PC-9 (cell line): ENCODE measurements at regions of chr2 and their contacts with region 1.

Region 1: GRCh38 chr2:200963124-200963917 is at the start of gene ORC2:
- DNase-seq: peak; percentile 87 to 96
- H3K4me3 ChIP-seq: peak within 1 kb of the TSS; percentile 95
- H3K27ac ChIP-seq: peak within 1 kb of the TSS; percentile 76
- H3K4me1 ChIP-seq: peaks cover 51% of the 10 kb centered on the region
- H3K27me3 ChIP-seq: no peaks in the 10 kb centered on the region
- CTCF ChIP-seq: peak; percentile 65; the same call in 1 of the 2 replicates
- total RNA-seq, gene ORC2: 34.0 and 43.3 TPM in 2 replicates

Region 2: GRCh38 chr2:200975672-200976071 is 12.4 kb after region 1 on chr2:
- CTCF ChIA-PET with region 1: no interaction called
- POLR2A ChIA-PET with region 1: interaction called, 12 read pairs
- intact Hi-C with region 1: no loop called
- DNase-seq: no peak
- H3K4me3 ChIP-seq: no peak overlapping the region
- H3K27ac ChIP-seq: no peak overlapping the region
- H3K4me1 ChIP-seq: no peaks in the 10 kb centered on the region
- H3K27me3 ChIP-seq: no peaks in the 10 kb centered on the region
- CTCF ChIP-seq: no peak

Region 3: GRCh38 chr2:201182650-201183364 is 219.5 kb after region 1 on chr2 and contains the start of gene CASP10:
- CTCF ChIA-PET with region 1: no interaction called
- POLR2A ChIA-PET with region 1: no interaction called
- intact Hi-C with region 1: no loop called
- DNase-seq: peak; percentile 44 to 80
- H3K4me3 ChIP-seq: peak within 1 kb of the TSS; percentile 57
- H3K27ac ChIP-seq: peak within 1 kb of the TSS; percentile 31
- H3K4me1 ChIP-seq: 0 out of 2 replicates have a peak, but pooled peaks cover 17% of the 10 kb centered on the region
- H3K27me3 ChIP-seq: no peaks in the 10 kb centered on the region
- CTCF ChIP-seq: peak; percentile 64
- total RNA-seq, gene CASP10: 15.2 and 16.9 TPM in 2 replicates